ENCODE measurements at regions of chr22 and their contacts with region 1.

Region 1: DNA sequence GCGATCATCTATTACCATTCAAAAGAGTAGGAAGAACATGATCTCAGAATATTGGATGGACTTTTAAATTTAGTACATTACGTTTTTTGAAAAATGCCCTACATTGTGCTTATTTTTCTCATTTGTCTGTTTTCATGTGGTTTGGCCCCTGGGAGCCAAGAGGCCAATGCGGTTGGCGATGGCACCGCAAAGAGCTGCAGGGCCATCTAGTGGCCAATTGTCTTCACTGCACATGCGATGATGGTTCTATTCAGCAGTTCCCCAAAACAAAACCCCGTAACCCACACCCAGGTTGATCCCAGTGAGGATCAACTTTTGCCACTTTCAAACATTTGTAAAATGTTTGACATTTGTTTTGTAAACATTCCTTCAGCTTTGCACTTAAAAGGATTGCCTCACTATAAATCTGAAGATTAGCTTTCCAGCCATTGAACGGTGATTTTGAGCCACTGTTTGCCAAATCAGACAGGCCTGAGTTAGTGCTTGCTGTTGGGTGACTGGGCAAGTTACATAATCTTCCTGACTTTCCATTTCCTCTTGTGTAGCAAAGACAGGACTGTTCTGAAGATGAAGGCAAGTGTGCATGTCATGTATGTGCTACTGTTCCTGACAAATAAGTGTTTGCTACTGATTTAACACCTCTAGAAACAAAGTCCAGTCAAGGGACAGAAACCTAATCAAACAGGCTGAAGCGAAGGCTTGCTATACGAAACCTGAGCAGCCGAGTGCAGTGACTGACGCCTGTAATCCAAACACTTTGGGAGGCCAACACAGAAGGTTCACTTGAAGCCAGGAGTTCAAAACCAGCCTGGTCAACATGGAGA is 29.2 kb upstream of the XBP1 start:
- DNase-seq: peak; percentile 80
- CTCF ChIP-seq: peak; percentile 94

Region 2: DNA sequence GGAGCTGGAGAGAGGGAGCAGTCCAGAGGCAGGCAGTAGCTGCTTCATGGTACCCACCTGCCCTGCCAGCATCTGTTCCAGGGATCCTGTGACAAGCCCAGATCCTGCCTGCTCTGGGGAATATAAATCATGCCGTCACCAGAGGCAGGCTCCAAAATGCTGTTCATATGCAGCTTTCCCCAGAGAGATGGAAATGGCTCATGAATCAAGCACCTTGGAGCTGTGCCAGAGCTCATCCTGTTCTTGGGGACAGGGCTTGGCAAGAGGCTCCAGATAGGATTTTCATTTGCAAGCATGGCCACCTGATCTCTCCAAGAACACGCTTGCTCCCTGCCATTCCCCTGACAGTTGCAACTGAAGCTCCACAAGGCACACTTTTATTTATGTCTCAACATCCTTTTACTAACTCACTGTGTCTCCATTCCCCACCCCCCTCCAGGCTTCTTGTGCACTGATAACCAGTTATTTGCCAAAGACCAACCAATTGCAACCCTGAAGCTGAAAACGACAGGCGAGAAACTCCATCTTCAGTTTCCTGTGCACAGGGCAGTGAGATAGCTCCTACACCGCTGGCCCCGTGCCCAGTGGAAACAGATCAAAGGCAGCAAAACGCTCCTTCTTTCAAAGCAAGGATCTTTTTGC is 794.7 kb before region 1 on chr22:
- in situ Hi-C with region 1: loop called (anchors 25 kb)
- DNase-seq: no peak
- CTCF ChIP-seq: no peak

Region 3: GRCh38 chr22:28600546-28601143 is 228.9 kb before region 1 on chr22:
- in situ Hi-C with region 1: loop called (anchors 5 kb)
- DNase-seq: peak; percentile 43
- CTCF ChIP-seq: no peak

Region 4: GRCh38 chr22:29426476-29426875 is 596.9 kb after region 1 on chr22:
- in situ Hi-C with region 1: no loop called
- DNase-seq: no peak
- CTCF ChIP-seq: no peak